Right ventricle myocardium inferior (tissue), 1 donor: ENCODE measurements at regions of chr9 and their contacts with region 1.

Region 1: DNA sequence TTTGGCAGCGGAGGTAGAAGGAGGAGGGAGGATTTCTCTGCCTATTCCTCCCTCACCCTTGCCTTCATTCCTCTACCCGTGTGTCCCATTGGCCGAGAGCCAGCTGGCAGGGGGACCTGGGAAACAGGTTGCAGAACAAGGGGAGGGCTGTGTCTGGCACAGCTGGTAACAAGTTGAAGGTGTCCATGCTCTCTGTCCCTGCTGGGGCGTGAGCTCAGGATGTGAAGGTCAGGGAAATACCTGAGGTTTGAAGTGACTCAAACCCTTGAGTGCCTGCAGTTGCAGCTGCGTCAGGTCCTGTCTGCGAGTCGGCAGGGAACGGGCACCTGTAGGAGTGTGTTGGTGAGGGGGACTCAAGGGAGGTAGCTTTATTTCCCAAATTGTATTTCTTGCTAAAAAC is 16.2 kb downstream of the MIGA2 start:
- DNase-seq: peak; percentile 87
- ATAC-seq: peak; percentile 89

Region 2: DNA sequence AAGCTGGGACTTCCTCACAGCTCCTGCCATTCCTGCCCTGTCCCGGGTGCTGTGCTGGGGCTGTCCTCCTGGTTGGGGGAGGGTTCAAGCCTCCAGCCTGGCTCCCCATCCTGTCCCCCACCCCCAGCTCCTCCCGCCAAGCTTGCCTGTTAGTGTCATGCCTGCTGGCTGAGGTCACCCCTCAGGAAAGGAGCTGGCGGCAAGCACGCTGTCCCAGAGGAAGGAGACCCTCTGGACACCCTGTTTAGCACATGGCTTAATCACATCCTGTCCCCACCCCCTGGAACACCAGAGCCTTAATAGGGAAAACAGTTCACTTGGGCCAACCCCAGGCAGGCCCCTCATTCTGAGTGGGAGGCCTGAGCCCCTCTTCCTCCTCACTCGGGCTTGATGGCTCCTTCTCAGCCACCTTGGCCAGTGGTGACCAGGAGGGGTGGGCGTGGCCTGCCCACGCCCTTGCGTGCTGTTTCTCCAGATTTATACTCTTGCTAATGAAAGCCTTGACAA is 141.0 kb before region 1 on chr9:
- intact Hi-C with region 1: no loop called
- DNase-seq: peak; percentile 82
- ATAC-seq: peak; percentile 58

Region 3: DNA sequence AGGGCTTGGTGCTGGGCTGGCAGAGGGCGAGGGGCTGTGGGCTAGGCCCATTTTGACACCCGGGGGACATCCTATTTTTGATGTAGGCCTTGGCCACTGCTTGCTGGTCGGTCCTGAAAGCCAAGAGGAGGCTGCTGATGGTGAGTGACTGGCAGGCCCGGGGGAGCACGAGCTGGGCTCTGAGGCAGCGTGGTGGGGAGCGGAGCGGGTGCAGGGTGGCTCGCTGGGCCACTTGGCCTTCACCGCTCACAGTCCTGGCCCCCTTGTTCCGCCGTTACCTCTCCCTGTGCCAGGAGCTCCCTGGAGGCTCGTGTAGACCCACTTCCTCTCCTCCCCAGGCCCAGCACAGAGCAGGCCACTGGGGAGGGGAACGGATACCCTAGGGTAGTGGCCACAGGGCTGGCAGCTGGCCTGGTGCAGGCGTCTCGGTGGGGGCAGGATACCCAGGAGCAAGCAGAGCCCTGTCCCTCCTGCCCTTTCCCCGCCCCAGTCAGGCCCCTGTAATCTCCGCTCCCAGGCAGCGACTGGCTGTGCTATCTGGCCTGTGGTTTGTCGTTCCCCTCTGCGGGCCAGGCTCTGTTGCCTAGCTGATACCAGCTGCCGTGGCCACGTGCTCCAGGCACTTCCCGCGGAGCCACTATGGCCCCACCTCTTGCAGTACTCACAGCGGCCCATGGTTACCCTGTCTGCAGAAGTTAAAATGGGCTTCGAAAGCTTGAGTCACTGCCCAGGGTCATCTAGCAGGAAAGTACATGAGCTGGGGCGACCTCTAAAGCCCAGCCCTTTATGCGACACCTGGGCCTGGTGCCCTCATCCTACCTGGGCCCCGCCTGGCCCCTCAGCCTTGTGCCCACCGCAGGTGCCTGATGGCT is 16.6 kb after region 1 on chr9:
- intact Hi-C with region 1: loop called (anchors 1 kb)
- DNase-seq: peak; percentile 89
- ATAC-seq: peak; percentile 94